IMR-90 (cell line): ENCODE measurements at regions of chr13 and their contacts with region 1.

Region 1: DNA sequence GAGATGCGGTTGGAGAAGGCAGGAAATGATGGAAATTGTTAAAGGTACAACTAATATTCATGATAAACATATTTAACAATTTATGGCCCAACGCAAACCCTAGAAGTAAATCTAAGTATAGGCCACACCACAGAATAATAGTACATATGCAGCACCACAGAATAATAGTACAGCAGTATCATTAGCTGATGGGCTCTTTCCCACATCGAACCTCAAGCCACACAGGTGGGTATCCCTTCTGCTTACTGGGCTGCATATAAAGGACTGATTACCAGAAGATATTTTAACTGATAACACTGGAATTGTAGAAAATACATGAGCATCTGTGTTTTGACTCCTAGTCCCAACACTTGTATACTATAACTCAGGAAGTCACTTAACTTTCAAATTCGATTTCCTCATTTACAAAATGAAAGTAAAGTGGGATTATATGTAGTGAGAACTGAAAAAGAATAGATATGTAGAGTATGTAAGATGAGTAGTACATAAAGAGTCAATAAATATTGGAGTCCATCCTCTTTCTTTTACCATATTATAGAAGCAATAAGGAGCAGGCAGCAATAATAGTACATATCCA is 91.5 kb downstream of the TSC22D1 start:
- DNase-seq: no peak
- ATAC-seq: no peak; the same call in 1 of the 2 replicates
- H3K4me3 ChIP-seq: no peak overlapping the region
- H3K27ac ChIP-seq: no peak overlapping the region
- H3K4me1 ChIP-seq: peaks cover 2% of the 10 kb centered on the region; the same call in 1 of the 2 replicates
- H3K27me3 ChIP-seq: no peaks in the 10 kb centered on the region
- CTCF ChIP-seq: no peak
- POLR2A ChIP-seq: no peak
- RAD21 ChIP-seq: no peak

Region 2: DNA sequence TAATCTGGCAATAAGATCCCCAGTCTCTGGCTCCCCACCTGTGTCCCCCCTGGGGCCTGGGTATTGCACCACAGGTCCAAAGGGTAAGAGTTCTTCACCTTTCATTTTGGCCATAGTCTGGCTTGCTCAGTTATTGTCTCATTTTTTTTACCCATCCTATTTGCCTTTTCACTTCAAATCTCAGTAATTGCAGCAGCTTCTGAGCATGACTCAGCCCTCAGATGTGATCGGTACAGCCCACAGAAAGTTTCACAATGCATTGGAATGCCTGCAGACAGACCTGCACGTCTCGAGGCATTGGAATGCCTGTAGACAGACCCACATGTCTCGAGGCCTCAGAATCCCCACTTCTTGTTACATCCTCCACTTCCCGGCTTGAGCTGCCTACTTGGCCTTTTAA is 331.0 kb after region 1 on chr13:
- CTCF ChIA-PET with region 1: no interaction called
- POLR2A ChIA-PET with region 1: no interaction called
- dilution Hi-C with region 1: no loop called
- in situ Hi-C with region 1: no loop called
- intact Hi-C with region 1: loop called (anchors 10 kb)
- DNase-seq: peak; percentile 98
- ATAC-seq: peak; percentile 87
- H3K4me3 ChIP-seq: no peak overlapping the region
- H3K27ac ChIP-seq: peak overlapping the region; percentile 63
- H3K4me1 ChIP-seq: peaks cover 27% of the 10 kb centered on the region
- H3K27me3 ChIP-seq: no peaks in the 10 kb centered on the region
- CTCF ChIP-seq: no peak
- POLR2A ChIP-seq: no peak
- RAD21 ChIP-seq: peak; percentile 8; the same call in 1 of the 2 replicates

Region 3: GRCh38 chr13:44879463-44880058 is 394.9 kb after region 1 on chr13:
- CTCF ChIA-PET with region 1: interaction called, 3 read pairs
- POLR2A ChIA-PET with region 1: no interaction called
- dilution Hi-C with region 1: no loop called
- in situ Hi-C with region 1: no loop called
- intact Hi-C with region 1: loop called (anchors 1 kb)
- DNase-seq: peak; percentile 64
- ATAC-seq: peak; percentile 40; the same call in 1 of the 2 replicates
- H3K4me3 ChIP-seq: no peak overlapping the region
- H3K27ac ChIP-seq: no peak overlapping the region
- H3K4me1 ChIP-seq: peaks cover 5% of the 10 kb centered on the region
- H3K27me3 ChIP-seq: no peaks in the 10 kb centered on the region
- CTCF ChIP-seq: peak; percentile 53
- POLR2A ChIP-seq: no peak
- RAD21 ChIP-seq: peak; percentile 68

Region 4: DNA sequence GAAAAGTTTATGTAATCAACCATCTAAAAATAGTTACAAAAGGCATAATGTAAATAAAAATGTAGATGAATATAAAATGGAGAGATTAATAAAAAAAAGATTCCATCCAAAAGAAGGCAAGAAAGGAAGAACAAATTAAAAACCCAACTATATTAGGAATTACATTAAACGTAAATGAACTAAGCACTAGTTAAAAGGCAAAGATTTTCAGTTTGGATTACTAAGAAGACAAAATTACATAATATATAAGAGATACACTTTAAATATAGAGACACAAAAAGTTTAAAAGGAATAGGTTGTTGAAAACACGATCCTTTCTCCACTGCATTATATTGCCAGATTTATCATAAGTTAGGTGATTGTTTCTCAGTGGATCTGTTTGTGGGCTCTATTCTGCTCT is 477.3 kb after region 1 on chr13:
- CTCF ChIA-PET with region 1: no interaction called
- POLR2A ChIA-PET with region 1: no interaction called
- dilution Hi-C with region 1: no loop called
- in situ Hi-C with region 1: loop called (anchors 5 kb)
- intact Hi-C with region 1: no loop called
- DNase-seq: no peak
- ATAC-seq: no peak
- H3K4me3 ChIP-seq: no peak overlapping the region
- H3K27ac ChIP-seq: no peak overlapping the region
- H3K4me1 ChIP-seq: no peaks in the 10 kb centered on the region
- H3K27me3 ChIP-seq: no peaks in the 10 kb centered on the region
- CTCF ChIP-seq: no peak
- POLR2A ChIP-seq: no peak
- RAD21 ChIP-seq: no peak

Region 5: GRCh38 chr13:45310341-45311125 is 825.9 kb after region 1 on chr13:
- CTCF ChIA-PET with region 1: no interaction called
- POLR2A ChIA-PET with region 1: no interaction called
- dilution Hi-C with region 1: no loop called
- in situ Hi-C with region 1: loop called (anchors 25 kb)
- intact Hi-C with region 1: no loop called
- DNase-seq: no peak
- ATAC-seq: no peak
- H3K4me3 ChIP-seq: no peak overlapping the region
- H3K27ac ChIP-seq: no peak overlapping the region
- H3K4me1 ChIP-seq: no peaks in the 10 kb centered on the region; the same call in 1 of the 2 replicates
- H3K27me3 ChIP-seq: no peaks in the 10 kb centered on the region
- CTCF ChIP-seq: no peak
- POLR2A ChIP-seq: no peak
- RAD21 ChIP-seq: no peak